ENCODE measurements at regions of chr11 and their contacts with region 1.

Region 1: DNA sequence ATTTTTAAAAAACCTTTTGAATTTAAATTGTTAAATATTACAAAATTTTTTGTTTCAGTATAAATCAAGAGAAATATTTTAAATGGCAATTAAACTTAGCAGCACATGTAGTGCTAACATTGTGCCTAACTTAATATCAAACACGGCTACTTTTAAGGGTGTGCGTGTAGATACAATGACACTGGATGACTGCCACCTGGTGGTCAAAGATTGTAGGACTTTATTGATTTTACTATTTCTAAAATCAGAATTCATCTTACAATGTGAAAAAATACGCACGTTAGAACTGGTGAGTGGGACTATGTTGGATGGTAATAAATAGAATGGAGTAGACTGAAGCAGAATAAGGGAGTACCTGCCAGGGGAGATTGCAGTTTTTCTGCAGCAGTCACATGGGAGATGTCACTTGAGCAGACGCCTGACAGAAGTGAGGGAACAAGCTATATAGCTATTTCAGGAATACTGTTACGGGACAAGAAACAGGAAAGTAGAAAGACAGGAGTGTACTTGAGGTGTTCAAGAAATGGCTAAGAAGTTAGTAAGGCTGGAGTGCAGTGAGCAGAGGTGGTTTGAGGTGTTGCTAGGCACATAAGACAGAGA is 52.9 kb downstream of the UVRAG start:
- DNase-seq: peak; percentile 65
- ATAC-seq: peak; percentile 51
- H3K4me3 Mint-ChIP-seq: no peak overlapping the region
- H3K27ac Mint-ChIP-seq: no peak overlapping the region
- H3K4me1 Mint-ChIP-seq: peaks cover 4% of the 10 kb centered on the region
- H3K27me3 Mint-ChIP-seq: no peaks in the 10 kb centered on the region

Region 2: GRCh38 chr11:75718419-75719339 is 149.2 kb before region 1 on chr11:
- CTCF ChIA-PET with region 1: interaction called, 11 read pairs
- POLR2A ChIA-PET with region 1: no interaction called
- DNase-seq: no peak
- ATAC-seq: no peak
- H3K4me3 Mint-ChIP-seq: no peak overlapping the region
- H3K27ac Mint-ChIP-seq: no peak overlapping the region
- H3K4me1 Mint-ChIP-seq: peaks cover 2% of the 10 kb centered on the region
- H3K27me3 Mint-ChIP-seq: peaks cover 9% of the 10 kb centered on the region

Region 3: DNA sequence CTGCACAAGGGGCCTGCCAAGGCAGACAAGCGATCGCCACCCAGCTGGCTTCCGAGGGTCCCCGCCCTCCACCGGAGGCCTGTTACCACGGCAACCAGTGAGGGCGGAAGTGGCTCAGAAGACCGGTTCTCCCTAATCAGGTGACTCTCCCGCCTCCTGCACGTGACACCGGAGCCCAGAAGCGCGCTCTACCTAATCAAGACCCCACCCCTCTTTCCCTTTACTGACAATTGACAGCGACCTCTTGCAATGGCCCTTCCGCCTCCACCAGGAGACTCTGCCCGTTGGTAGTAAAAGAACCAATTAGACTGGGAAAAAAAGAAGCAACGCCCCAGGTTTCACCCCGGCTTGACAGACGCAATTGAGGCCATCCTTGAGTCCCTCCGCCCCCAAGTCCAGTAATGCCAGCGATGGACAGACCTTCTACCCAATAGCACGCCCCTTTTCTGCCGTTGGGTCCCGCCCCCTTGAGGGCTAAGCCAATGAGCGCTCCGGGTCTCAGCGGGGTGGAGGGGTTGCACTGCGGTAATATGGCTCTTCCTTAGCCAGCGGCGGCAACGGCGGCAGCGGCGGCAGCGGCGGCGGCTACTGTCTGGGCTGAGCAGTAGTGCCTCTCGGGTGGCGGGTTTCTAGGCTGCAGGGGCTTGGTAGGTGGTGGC is 53.1 kb before region 1 on chr11 and contains the start of gene UVRAG:
- CTCF ChIA-PET with region 1: interaction called, 15 read pairs
- POLR2A ChIA-PET with region 1: interaction called, 3 read pairs
- DNase-seq: peak; percentile 98
- ATAC-seq: peak; percentile 90
- H3K4me3 Mint-ChIP-seq: no peak within 1 kb of the TSS
- H3K27ac Mint-ChIP-seq: peak within 1 kb of the TSS; percentile 94
- H3K4me1 Mint-ChIP-seq: peaks cover 11% of the 10 kb centered on the region
- H3K27me3 Mint-ChIP-seq: peaks cover 5% of the 10 kb centered on the region
- total RNA-seq, gene UVRAG: 19.8 to 21.1 TPM

Region 4: DNA sequence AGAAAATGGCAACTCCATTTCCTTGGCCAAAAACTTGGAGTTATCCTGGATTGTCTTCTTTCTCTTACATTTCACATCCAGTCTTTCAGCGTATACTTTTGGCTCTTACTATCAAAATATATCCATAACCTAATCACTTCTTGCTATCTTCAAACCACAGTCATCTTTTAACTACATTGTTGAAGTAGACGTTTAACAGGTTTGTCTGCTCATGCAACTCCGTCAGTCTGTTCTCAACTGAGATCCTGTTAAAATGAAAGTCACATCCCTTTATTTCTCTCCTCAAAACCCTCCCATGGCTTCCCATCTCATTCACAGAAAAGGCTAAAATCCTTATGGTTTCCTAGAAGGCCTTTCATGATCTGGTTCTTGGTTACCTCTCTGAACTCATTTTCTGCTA is 11.0 kb before region 1 on chr11:
- CTCF ChIA-PET with region 1: interaction called, 11 read pairs
- POLR2A ChIA-PET with region 1: no interaction called
- DNase-seq: no peak
- ATAC-seq: no peak
- H3K4me3 Mint-ChIP-seq: no peak overlapping the region
- H3K27ac Mint-ChIP-seq: no peak overlapping the region
- H3K4me1 Mint-ChIP-seq: no peaks in the 10 kb centered on the region
- H3K27me3 Mint-ChIP-seq: no peaks in the 10 kb centered on the region

Measured in activated CD8-positive, alpha-beta T cell treated with anti-CD3 and anti-CD28 coated beads, Interleukin-2, amount 10 ng/mL, durations not matched to agents 7 days and 5 days (primary cell).